ENCODE measurements at regions of chr13 and their contacts with region 1.

Region 1: GRCh38 chr13:110950819-110951570 is 36.1 kb upstream of the ANKRD10 start:
- DNase-seq: no peak

Region 2: GRCh38 chr13:110396913-110397381 is 554.0 kb before region 1 on chr13:
- in situ Hi-C with region 1: no loop called
- DNase-seq: no peak

Region 3: DNA sequence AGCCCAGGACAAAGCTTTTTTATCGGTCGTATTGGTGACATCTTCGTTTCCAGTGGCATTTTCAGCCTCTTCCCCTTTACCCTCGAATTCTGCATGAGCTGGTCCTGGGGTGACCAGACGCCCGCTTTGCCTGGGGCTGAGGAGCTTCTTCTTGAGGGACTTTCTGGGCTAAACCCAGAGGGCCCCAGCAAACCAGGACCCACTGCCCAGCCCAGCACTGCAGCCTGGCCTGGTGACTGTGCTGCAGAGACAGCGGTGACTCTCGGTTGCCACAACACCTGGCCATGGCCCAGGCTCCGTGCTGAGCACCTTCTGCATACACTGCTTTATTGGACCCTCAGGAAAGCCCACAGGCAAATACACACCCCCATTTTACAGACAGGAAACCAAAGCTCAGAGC is 1446.1 kb after region 1 on chr13:
- in situ Hi-C with region 1: loop called (anchors 5 kb)
- DNase-seq: no peak

Measured in KBM-7 (cell line).